Lower leg skin (tissue), 4 donors: ENCODE measurements at regions of chr9 and their contacts with region 1.

Region 1: DNA sequence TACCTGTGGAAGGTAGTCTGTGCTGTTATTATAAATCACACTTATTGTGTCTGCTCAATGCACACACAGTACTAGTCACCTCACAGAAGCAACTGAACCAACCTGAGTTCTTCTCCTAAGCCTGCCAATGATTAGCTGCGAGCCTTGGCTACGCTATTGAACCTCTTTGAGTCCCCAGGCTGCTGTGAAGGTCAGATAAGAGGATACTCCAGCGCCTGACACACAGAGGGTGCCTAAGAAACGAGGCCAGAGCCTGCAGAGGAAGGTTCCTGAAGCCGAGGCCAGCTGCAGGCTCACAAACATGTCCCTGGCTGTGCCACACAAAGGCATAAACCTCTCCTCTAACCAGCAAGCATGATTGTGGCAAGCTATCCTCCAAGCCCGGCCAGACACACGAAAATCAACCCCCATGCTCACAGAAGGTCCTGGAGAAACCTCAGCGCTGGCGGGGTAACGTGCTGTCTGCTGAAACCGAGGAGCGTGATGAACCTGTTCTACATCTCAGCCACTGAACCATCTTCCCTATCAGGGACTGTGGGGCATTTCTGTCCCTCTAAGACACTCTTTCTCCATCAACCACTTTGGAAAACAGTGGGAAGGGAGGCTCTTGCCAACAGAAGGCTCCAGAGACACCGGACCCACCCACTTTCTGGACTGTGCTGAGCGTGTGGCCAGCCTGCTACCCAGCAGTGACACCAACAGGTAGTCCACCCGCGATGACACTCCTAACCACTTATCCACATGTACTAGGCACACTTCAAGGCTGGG is 53.2 kb upstream of the SLC25A51 start:
- DNase-seq: no peak
- H3K4me3 ChIP-seq: no peak overlapping the region
- CTCF ChIP-seq: no peak
- POLR2A ChIP-seq: no peak

Region 2: GRCh38 chr9:37903647-37904444 is 53.2 kb before region 1 on chr9 and contains the start of gene SLC25A51:
- intact Hi-C with region 1: no loop called
- DNase-seq: peak; percentile 91 to 99
- H3K4me3 ChIP-seq: peak within 1 kb of the TSS; percentile 66
- CTCF ChIP-seq: peak in 1 of 3 donors; percentile 94
- POLR2A ChIP-seq: no peak
- total RNA-seq, gene SLC25A51: 13.3 to 24.8 (median 16.9) TPM

Region 3: DNA sequence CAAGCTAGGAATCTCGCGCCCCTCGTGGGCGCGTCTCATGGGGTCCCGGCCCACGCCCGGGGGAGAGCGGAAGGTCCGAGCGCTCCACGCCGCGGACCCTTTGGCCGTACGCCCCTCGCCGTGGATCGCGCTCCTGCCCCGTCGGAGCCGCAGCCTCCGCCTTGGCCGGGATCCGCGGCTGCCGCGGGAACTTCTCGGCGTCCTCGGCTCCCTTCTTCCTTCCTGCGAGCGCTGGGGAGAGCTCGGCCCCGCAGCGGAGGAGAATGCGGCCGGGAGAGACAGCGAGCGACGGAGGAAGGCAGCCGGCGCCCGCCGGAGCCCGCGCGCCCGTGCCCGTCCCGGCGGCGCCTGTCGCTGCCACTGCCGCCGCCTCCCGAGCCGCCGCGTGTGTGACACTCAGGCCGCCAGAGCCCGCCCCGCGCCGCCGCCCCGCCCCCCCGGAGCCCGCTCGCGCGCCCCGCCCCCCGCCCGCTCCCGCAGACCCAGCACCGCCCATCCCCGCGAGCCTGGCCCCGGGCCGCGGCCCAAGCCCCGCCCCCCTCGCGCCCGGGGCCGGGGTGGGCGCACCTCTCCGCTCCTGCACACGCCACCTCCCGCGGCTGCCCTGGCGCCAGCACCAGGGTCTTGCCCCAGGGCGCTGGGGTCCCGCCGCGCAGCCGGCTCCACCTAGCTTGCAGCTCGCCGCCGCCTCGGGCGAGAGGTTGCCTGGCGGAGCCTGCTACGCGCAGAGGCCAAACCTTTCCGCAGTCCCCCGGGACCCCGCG is 112.0 kb after region 1 on chr9 and contains the start of gene SHB:
- intact Hi-C with region 1: loop called (anchors 5 kb)
- DNase-seq: peak; percentile 50 to 96
- H3K4me3 ChIP-seq: peak within 1 kb of the TSS; percentile 69
- CTCF ChIP-seq: no peak
- POLR2A ChIP-seq: no peak
- total RNA-seq, gene SHB: 27.6 to 42.6 (median 34.5) TPM